GM13977 (cell line): ENCODE measurements at regions of chr6 and their contacts with region 1.

Region 1: DNA sequence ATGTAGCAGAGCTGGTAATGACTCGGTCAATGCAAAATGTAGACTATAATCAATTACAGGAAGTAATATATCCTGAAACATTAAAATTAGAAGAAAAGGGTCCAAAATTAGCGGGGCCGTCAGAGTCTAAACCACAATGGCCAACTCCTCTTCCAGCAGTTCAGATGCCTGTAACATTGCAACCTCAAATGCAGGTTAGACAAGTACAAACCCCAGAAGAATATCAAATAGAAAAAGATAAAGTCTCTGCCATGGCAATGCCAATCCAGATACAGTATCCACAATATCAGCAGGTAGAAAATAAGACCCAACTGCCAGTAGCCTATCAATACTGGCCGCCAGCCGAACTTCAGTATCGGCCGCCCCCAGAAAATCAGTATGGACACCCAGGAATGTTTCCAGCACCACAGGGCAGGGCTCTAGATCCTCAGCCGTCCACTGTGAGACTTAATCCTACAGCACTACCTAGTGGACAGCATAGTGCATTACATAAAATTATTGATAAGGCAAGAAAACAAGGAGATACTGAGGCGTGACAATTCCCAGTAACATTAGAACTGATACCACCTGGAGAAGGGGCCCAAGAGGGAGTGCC is 158.4 kb downstream of the GPX5 start:
- DNase-seq: no peak
- CTCF ChIP-seq: peak; percentile 68

Region 2: DNA sequence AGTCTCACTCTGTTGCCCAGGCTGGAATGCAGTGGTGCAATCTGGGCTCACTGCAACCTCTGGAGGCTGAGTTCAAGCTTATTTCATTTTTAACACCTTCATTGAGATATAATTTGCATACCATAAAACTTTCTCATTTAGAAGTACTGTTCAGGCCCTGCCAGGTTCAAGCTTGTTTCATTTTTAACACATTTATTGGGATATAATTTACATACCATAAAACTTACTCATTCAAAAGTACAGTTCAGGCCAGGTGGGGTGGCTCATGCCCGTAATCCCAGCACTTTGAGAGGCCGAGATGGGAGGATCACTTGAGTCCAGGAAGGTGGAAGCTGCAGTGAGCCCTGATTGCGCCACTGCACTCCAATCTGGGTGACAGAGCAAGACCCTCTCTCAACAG is 721.5 kb before region 1 on chr6:
- in situ Hi-C with region 1: no loop called
- DNase-seq: no peak
- CTCF ChIP-seq: no peak

Region 3: GRCh38 chr6:28408076-28408802 is 275.8 kb before region 1 on chr6:
- in situ Hi-C with region 1: no loop called
- DNase-seq: no peak
- CTCF ChIP-seq: no peak

Region 4: DNA sequence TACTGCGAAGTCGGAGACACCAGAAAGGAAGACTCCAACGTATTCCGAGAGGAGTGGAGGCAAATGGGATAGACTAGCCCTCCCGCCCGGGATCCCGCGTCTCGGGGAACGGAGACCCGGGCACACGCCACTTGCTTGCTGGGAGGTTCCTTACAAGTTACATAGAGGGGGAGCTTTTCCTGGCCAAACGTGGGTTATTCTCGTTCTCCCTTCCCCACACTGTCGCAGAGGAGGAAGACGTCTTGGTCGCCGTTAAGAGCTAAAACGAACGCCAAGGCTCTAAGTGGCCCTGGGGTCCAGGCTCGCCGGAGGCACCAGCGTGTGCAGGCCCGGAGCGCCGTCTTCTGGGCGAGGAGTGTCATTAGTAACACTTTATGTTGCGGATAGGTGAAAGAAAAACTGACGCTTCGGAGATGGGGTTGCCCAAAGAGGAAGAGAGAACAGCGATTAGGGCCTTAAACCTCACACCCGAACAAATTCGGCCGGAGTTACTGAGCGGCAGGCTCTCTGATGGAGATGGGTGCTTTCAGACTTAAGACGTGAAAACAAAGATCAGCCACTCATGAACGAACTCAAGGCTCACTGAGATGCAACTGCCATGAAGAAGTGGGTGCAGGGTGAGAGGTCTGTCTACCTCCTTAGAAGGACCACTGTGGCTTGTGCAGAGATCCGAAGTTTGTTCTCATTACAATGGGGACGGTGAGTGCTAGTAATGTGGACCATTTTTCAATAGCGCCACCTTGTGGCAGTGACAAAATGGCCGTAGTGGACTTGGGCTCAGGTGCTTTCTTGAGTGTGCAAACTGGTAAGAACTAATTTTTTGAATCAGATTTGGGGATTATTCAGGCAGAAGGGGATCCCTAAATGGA is 332.8 kb after region 1 on chr6:
- in situ Hi-C with region 1: loop called (anchors 25 kb)
- DNase-seq: peak; percentile 80
- CTCF ChIP-seq: peak; percentile 86

Region 5: GRCh38 chr6:29589423-29590048 is 905.5 kb after region 1 on chr6:
- in situ Hi-C with region 1: loop called (anchors 25 kb)
- DNase-seq: peak; percentile 64
- CTCF ChIP-seq: peak; percentile 84